ENCODE measurements at regions of chr9 and their contacts with region 1.

Region 1: DNA sequence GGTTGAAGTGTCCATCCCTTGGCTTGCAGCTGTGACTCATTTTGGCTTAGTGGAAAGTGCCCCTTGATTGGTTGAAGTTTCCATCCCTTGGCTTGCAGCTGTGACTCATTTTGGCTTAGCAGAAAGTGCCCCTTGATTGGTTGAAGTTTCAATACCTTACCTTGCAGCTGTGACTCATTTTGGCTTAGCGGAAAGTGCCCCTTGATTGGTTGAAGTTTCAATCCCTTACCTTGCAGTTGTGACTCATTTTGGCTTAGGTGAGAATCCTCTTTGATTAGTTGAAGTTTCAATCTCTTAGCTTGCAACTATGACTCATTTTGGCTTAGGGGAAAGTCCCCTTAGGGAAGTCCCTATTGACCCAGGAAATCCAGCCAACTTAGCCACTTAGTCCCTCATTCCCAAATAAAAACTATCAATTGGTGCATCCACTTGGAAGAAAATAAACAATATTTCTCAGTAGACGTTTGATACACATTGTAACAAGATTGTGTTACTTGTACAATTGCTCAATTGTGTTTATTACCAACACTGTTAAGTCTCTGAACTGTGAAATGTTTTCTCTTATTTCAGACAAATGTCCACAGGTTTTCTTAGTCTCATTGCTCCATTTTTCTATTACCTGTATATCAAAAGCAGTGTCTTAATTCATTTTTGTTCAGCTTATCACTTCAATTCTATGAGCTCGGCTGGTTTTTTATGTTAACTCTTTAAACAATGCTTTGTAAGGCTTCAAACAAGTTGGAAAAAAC is 2308.8 kb upstream of the ACO1 start:
- DNase-seq: peak; percentile 64
- H3K4me3 Mint-ChIP-seq: no peak overlapping the region
- H3K27ac Mint-ChIP-seq: peak overlapping the region; percentile 42
- H3K4me1 Mint-ChIP-seq: peaks cover 19% of the 10 kb centered on the region
- H3K27me3 Mint-ChIP-seq: no peaks in the 10 kb centered on the region

Region 2: DNA sequence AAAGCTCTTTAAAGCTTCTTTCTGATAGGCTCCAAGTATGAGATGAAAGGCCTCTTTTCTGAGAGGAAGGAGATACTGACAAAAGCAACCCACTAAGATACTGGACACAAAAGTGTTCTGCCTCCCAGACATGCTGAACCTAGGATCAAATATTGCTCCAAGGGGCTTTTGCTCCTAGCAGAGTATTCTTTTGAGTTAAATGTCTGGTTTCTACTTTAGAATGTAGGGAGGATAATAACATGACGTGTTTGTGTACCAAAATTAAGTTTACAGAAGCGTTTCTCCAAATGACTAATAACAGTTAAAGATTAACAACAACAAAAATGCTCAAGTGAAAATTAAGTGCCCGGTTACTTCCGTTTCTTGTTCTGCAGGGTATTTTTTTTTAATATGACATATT is 209.1 kb before region 1 on chr9:
- CTCF ChIA-PET with region 1: no interaction called
- POLR2A ChIA-PET with region 1: no interaction called
- intact Hi-C with region 1: loop called (anchors 5 kb)
- DNase-seq: no peak
- H3K4me3 Mint-ChIP-seq: no peak overlapping the region
- H3K27ac Mint-ChIP-seq: no peak overlapping the region
- H3K4me1 Mint-ChIP-seq: no peaks in the 10 kb centered on the region
- H3K27me3 Mint-ChIP-seq: no peaks in the 10 kb centered on the region

Region 3: GRCh38 chr9:31236344-31236743 is 1160.7 kb after region 1 on chr9:
- CTCF ChIA-PET with region 1: no interaction called
- POLR2A ChIA-PET with region 1: no interaction called
- intact Hi-C with region 1: loop called (anchors 5 kb)
- DNase-seq: no peak
- H3K4me3 Mint-ChIP-seq: no peak overlapping the region
- H3K27ac Mint-ChIP-seq: no peak overlapping the region
- H3K4me1 Mint-ChIP-seq: peaks cover 16% of the 10 kb centered on the region
- H3K27me3 Mint-ChIP-seq: no peaks in the 10 kb centered on the region